ENCODE measurements at regions of chr14 and their contacts with region 1.

Region 1: DNA sequence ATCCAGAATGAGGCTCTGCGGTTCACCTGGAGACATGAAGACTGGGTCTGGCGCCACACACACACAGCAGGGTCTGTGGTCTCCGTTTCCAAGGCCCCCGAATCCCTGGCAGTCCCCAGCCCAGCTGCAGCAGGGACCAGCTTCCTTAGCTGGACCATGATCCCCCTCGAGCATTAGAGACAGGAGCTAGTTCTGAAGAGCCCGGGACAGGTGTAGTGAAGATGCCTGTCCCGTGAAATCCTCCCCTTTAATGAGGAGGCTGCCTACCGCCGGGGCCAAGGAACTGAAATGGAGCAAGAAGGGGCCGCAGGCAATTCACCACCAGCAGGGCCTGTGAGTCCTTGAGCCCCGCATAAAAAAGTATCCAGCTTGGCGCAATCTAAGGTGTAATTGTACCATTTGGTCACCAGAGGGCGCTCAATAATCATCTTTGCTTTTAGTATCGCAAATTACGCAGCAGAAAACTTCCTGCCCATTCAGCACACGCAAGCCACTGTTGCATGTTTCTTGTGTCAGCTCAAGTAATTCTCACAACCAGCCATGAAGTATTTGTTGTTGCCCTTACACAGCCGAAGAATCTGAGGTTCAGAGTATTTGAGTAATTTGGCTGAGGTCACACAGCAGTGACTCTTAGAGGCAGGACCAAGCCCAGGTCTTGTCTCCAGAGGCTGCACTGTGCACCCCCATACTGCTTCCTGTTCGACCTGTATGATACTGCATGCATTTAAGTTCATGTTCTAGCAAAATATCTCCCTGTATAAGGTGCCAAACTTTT is 54.3 kb upstream of the PPP2R5C start:
- H3K4me3 Mint-ChIP-seq: no peak overlapping the region
- H3K27ac Mint-ChIP-seq: peak overlapping the region; percentile 83
- H3K4me1 Mint-ChIP-seq: peaks cover 36% of the 10 kb centered on the region
- H3K27me3 Mint-ChIP-seq: peaks cover 57% of the 10 kb centered on the region

Region 2: GRCh38 chr14:101761032-101761880 is 54.0 kb after region 1 on chr14 and contains the start of gene PPP2R5C:
- intact Hi-C with region 1: loop called (anchors 2 kb)
- H3K4me3 Mint-ChIP-seq: peak within 1 kb of the TSS; percentile 87
- H3K27ac Mint-ChIP-seq: peak within 1 kb of the TSS; percentile 82
- H3K4me1 Mint-ChIP-seq: peaks cover 21% of the 10 kb centered on the region
- H3K27me3 Mint-ChIP-seq: peaks cover 56% of the 10 kb centered on the region

Region 3: DNA sequence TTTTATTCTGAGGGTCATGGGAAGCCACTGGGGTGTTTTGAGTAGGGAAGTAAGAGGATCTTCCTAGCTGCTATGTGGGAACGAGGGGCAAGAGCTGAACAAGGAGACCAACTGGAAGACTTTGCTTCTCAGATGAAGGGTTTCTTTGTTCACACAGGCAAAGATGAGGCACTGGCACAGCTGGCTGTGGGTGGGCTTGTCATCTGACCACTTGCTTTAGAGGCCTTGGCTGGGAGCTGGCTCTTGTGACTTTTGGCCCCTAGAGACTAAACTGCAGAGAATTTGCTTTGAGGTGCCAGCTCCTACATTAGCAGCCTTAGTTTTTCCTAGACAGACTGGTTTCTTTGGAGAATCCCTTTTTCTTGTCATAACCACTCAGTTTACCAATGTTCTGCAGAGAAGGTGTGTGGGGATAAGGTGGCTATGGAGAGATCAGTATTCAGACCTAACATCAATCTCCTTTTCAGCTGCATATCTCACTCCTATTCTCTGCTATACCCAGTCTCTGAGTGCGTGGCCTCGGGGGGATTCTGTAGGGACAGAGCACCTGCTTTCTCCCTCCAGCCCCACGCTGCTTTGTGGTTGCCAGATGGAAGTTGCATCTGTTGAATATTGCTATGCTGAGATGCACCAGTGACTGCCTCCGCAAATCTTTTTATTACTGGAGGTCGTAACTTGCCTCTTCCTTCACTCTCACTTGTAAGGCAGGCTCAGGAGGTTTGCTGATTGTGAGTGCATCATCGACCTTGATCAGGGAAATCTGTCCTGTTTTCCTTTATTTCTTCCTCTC is 66.9 kb after region 1 on chr14:
- intact Hi-C with region 1: loop called (anchors 2 kb)
- H3K4me3 Mint-ChIP-seq: no peak overlapping the region
- H3K27ac Mint-ChIP-seq: no peak overlapping the region
- H3K4me1 Mint-ChIP-seq: peaks cover 11% of the 10 kb centered on the region
- H3K27me3 Mint-ChIP-seq: peaks cover 20% of the 10 kb centered on the region

Region 4: GRCh38 chr14:101889898-101890297 is 182.6 kb after region 1 on chr14:
- intact Hi-C with region 1: loop called (anchors 10 kb)
- H3K4me3 Mint-ChIP-seq: no peak overlapping the region
- H3K27ac Mint-ChIP-seq: no peak overlapping the region
- H3K4me1 Mint-ChIP-seq: no peaks in the 10 kb centered on the region
- H3K27me3 Mint-ChIP-seq: no peaks in the 10 kb centered on the region

Measured in dendritic cell treated with granulocyte-macrophage colony-stimulating factor and Interleukin-4, amounts not matched to agents 40 ng/mL and 50 ng/mL, for 4 days (primary cell).